Activated CD8-positive, alpha-beta memory T cell treated with anti-CD3 and anti-CD28 coated beads, Interleukin-2, amount 10 ng/mL, durations not matched to agents 7 days and 5 days (primary cell): ENCODE measurements at regions of chr4 and their contacts with region 1.

Region 1: GRCh38 chr4:38179690-38180377 is 219.6 kb downstream of the PTTG2 start:
- DNase-seq: peak; percentile 78
- ATAC-seq: peak; percentile 52
- H3K4me3 Mint-ChIP-seq: no peak overlapping the region
- H3K27ac Mint-ChIP-seq: no peak overlapping the region
- H3K4me1 Mint-ChIP-seq: peaks cover 30% of the 10 kb centered on the region
- H3K27me3 Mint-ChIP-seq: peaks cover 36% of the 10 kb centered on the region

Region 2: GRCh38 chr4:38062088-38062893 is 117.5 kb before region 1 on chr4:
- CTCF ChIA-PET with region 1: interaction called, 18 read pairs
- DNase-seq: peak; percentile 72
- ATAC-seq: peak; percentile 78
- H3K4me3 Mint-ChIP-seq: peak overlapping the region; percentile 29
- H3K27ac Mint-ChIP-seq: peak overlapping the region; percentile 14
- H3K4me1 Mint-ChIP-seq: peaks cover 16% of the 10 kb centered on the region
- H3K27me3 Mint-ChIP-seq: no peaks in the 10 kb centered on the region

Region 3: DNA sequence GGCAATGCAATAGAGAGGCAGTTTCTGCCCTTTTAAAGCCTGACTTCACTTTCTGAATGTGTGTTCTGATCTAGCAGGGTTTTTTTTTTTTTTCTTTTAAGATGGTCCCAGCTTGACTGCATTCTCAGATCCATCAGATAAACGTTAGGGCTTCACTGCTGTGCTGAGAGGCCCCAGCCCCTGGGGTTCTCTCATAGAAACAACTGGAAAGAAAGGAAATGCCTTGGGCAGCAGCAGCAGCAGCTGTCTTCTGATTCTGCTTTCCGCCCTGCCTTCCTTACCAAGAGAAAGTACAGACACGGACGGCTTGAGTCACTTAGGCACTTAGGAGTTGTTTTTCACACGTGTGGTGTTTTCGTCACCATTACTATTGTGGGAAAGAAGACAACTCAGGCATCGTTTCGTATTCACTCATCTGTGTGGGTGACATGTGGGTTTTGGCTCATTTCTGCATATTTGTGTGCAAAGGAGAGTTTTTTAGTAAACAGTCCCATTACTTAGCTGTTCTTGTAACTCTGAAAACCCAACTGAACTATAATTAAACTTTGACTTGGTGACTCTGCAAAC is 47.6 kb before region 1 on chr4:
- CTCF ChIA-PET with region 1: interaction called, 30 read pairs
- DNase-seq: peak; percentile 92
- ATAC-seq: peak; percentile 69
- H3K4me3 Mint-ChIP-seq: peak overlapping the region; percentile 54
- H3K27ac Mint-ChIP-seq: peak overlapping the region; percentile 84
- H3K4me1 Mint-ChIP-seq: peaks cover 78% of the 10 kb centered on the region
- H3K27me3 Mint-ChIP-seq: peaks cover 5% of the 10 kb centered on the region

Region 4: GRCh38 chr4:38204339-38205035 is 24.7 kb after region 1 on chr4:
- CTCF ChIA-PET with region 1: interaction called, 11 read pairs
- DNase-seq: no peak
- ATAC-seq: no peak
- H3K4me3 Mint-ChIP-seq: no peak overlapping the region
- H3K27ac Mint-ChIP-seq: no peak overlapping the region
- H3K4me1 Mint-ChIP-seq: no peaks in the 10 kb centered on the region
- H3K27me3 Mint-ChIP-seq: no peaks in the 10 kb centered on the region

Region 5: DNA sequence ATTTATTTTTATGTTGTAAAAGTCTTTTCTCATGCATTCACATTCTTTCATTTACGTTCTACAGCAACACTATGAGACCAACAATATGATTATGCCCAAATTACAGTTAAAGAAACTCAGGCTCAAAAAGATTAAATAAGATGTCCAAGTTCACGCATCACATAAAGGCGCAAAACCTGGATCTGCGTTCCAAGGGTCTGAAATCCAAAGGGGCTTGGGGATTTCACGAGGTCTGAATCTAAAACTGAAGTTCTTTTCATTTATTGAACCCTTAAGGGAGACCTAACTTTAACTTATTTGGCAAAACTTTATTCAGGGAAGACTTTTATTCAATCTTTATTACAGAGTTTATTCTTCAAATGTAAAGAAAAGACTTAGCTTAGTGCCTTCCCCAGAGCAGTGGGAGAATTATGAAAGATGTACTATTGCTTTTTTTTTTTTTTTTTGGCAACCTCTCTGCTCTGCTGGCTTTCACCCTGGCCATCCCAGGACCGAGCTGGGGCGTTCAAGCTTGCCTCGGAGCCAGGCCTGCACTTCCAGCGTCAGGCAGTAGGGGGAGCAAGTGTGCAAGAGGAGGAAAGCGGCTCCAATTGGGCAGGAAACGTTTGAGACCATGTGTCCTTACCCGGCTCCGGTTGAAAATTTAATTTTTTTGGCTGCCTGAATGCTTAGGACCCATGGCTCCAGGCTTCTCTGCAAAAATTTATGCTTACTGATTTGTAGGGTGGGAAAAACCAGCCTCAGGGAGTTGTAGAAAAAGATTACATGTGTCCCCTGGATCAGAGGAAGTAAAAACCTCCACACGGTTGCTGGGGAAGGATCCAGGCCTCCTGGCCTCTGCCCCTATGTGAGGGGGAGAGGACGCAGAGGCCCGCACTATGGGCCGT is 139.9 kb after region 1 on chr4:
- CTCF ChIA-PET with region 1: interaction called, 63 read pairs
- DNase-seq: peak; percentile 93
- ATAC-seq: peak; percentile 66
- H3K4me3 Mint-ChIP-seq: peak overlapping the region; percentile 62
- H3K27ac Mint-ChIP-seq: peak overlapping the region; percentile 84
- H3K4me1 Mint-ChIP-seq: peaks cover 30% of the 10 kb centered on the region
- H3K27me3 Mint-ChIP-seq: peaks cover 8% of the 10 kb centered on the region

Region 6: GRCh38 chr4:38675146-38676121 is 495.6 kb after region 1 on chr4:
- CTCF ChIA-PET with region 1: interaction called, 83 read pairs
- DNase-seq: peak; percentile 86
- ATAC-seq: peak; percentile 81
- H3K4me3 Mint-ChIP-seq: no peak overlapping the region
- H3K27ac Mint-ChIP-seq: no peak overlapping the region
- H3K4me1 Mint-ChIP-seq: peaks cover 31% of the 10 kb centered on the region
- H3K27me3 Mint-ChIP-seq: no peaks in the 10 kb centered on the region

Region 7: GRCh38 chr4:38759113-38759789 is 579.4 kb after region 1 on chr4:
- CTCF ChIA-PET with region 1: interaction called, 10 read pairs
- DNase-seq: peak; percentile 71
- ATAC-seq: peak; percentile 69
- H3K4me3 Mint-ChIP-seq: no peak overlapping the region
- H3K27ac Mint-ChIP-seq: no peak overlapping the region
- H3K4me1 Mint-ChIP-seq: peaks cover 5% of the 10 kb centered on the region
- H3K27me3 Mint-ChIP-seq: peaks cover 11% of the 10 kb centered on the region